Caco-2 (cell line): ENCODE measurements at regions of chr3 and their contacts with region 1.

Region 1: DNA sequence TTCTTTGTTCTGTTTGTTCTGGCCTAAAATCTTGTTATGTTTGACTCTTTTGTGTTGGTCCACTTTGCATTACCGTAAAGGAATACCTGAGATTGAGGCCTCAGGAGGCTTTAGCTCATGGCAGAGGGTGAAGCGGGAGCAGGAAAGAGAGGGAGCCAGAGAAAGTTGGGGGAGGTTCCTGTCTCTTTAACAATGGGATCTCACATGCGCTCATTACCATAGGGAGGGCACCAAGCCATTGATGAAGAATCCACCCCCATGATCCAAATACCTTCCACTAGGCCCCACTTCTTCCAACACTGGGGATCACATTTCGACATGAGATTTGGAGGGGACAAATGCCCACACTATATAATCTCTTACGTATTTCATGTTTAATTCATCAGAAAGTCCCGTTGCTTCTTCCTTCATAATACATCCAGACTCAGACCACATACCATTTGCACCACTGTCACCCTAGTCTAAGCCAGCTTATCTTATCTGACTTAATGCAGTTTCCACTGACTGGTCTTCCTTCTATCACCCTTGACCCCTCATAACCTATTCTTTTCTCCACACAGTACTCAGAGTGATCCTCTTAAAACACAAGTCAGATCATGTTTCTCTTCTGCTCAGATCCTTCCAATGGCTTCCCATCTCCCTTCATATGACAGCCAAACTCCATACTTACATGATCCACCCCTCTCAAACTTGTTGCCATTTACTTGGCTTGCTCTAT is 13.5 kb downstream of the KBTBD8 start:
- DNase-seq: no peak
- H3K4me3 ChIP-seq: no peak overlapping the region
- H3K4me3 Mint-ChIP-seq: no peak overlapping the region
- H3K27ac Mint-ChIP-seq: no peak overlapping the region
- H3K4me1 ChIP-seq: peaks cover 14% of the 10 kb centered on the region
- H3K4me1 Mint-ChIP-seq: peaks cover 18% of the 10 kb centered on the region
- H3K27me3 ChIP-seq: no peaks in the 10 kb centered on the region
- H3K27me3 Mint-ChIP-seq: no peaks in the 10 kb centered on the region
- CTCF ChIP-seq: no peak

Region 2: GRCh38 chr3:67030785-67031740 is 19.5 kb after region 1 on chr3:
- CTCF ChIA-PET with region 1: no interaction called
- POLR2A ChIA-PET with region 1: no interaction called
- intact Hi-C with region 1: loop called (anchors 1 kb)
- DNase-seq: no peak
- H3K4me3 ChIP-seq: no peak overlapping the region
- H3K4me3 Mint-ChIP-seq: no peak overlapping the region
- H3K27ac Mint-ChIP-seq: no peak overlapping the region
- H3K4me1 ChIP-seq: no peaks in the 10 kb centered on the region
- H3K4me1 Mint-ChIP-seq: peaks cover 16% of the 10 kb centered on the region
- H3K27me3 ChIP-seq: no peaks in the 10 kb centered on the region
- H3K27me3 Mint-ChIP-seq: peaks cover 3% of the 10 kb centered on the region
- CTCF ChIP-seq: no peak

Region 3: GRCh38 chr3:68424796-68425460 is 1413.4 kb after region 1 on chr3:
- CTCF ChIA-PET with region 1: no interaction called
- POLR2A ChIA-PET with region 1: no interaction called
- intact Hi-C with region 1: no loop called
- DNase-seq: peak; percentile 8 to 35
- H3K4me3 ChIP-seq: no peak overlapping the region
- H3K4me3 Mint-ChIP-seq: no peak overlapping the region
- H3K27ac Mint-ChIP-seq: no peak overlapping the region
- H3K4me1 ChIP-seq: no peaks in the 10 kb centered on the region
- H3K4me1 Mint-ChIP-seq: no peaks in the 10 kb centered on the region
- H3K27me3 ChIP-seq: no peaks in the 10 kb centered on the region
- H3K27me3 Mint-ChIP-seq: no peaks in the 10 kb centered on the region
- CTCF ChIP-seq: no peak